ENCODE measurements at regions of chr20 and their contacts with region 1.

Region 1: GRCh38 chr20:4949833-4950178 is 51.5 kb downstream of the SLC23A2 start:
- DNase-seq: peak; percentile 63
- ATAC-seq: peak; percentile 66
- H3K4me3 ChIP-seq: peak overlapping the region in 3 of 5 experiments; percentile 23 to 37 (median 33)
- H3K4me3 Mint-ChIP-seq: peak overlapping the region; percentile 89
- H3K27ac ChIP-seq: peak overlapping the region in 1 of 2 donors; percentile 5
- H3K27ac Mint-ChIP-seq: peak overlapping the region; percentile 91
- H3K4me1 ChIP-seq: peaks cover 33 to 40% of the 10 kb centered on the region in 2 donors
- H3K4me1 Mint-ChIP-seq: peaks cover 48% of the 10 kb centered on the region
- H3K27me3 ChIP-seq: no peaks in the 10 kb centered on the region
- H3K27me3 Mint-ChIP-seq: no peaks in the 10 kb centered on the region
- CTCF ChIP-seq: peak; percentile 65

Region 2: GRCh38 chr20:4813863-4814695 is 135.7 kb before region 1 on chr20:
- CTCF ChIA-PET with region 1: interaction called, 18 read pairs
- POLR2A ChIA-PET with region 1: no interaction called
- intact Hi-C with region 1: loop called (anchors 5 kb)
- DNase-seq: peak; percentile 94
- ATAC-seq: peak; percentile 48
- H3K4me3 ChIP-seq: peak overlapping the region; percentile 49 to 67 (median 50)
- H3K4me3 Mint-ChIP-seq: peak overlapping the region; percentile 92
- H3K27ac ChIP-seq: peak overlapping the region; percentile 99
- H3K27ac Mint-ChIP-seq: peak overlapping the region; percentile 99
- H3K4me1 ChIP-seq: peaks cover 69 to 82% of the 10 kb centered on the region in 2 donors
- H3K4me1 Mint-ChIP-seq: peaks cover 87% of the 10 kb centered on the region
- H3K27me3 ChIP-seq: no peaks in the 10 kb centered on the region
- H3K27me3 Mint-ChIP-seq: no peaks in the 10 kb centered on the region
- CTCF ChIP-seq: peak; percentile 12

Region 3: DNA sequence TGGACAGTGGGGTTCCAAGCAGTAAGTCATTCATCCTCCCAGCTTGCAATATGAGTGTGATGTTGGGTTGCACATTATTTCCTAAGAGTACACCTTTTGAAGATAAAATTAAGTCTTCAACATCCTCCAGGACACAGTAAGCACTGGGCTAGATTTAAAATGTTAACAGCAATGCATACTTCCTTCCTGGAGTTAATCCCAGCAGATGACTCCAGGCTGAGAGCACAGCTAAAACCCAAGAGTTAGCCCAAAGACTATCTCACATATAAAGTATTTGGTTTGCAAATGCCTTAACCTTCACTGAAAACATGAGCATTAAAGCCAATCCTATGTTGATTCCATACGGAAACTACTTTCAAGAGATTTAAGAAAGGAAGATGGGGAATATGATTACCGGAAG is 17.7 kb before region 1 on chr20:
- CTCF ChIA-PET with region 1: interaction called, 10 read pairs
- POLR2A ChIA-PET with region 1: no interaction called
- intact Hi-C with region 1: no loop called
- DNase-seq: no peak
- ATAC-seq: no peak
- H3K4me3 ChIP-seq: no peak overlapping the region
- H3K4me3 Mint-ChIP-seq: no peak overlapping the region
- H3K27ac ChIP-seq: no peak overlapping the region
- H3K27ac Mint-ChIP-seq: no peak overlapping the region
- H3K4me1 ChIP-seq: no peaks in the 10 kb centered on the region
- H3K4me1 Mint-ChIP-seq: peaks cover 13% of the 10 kb centered on the region
- H3K27me3 ChIP-seq: no peaks in the 10 kb centered on the region
- H3K27me3 Mint-ChIP-seq: no peaks in the 10 kb centered on the region
- CTCF ChIP-seq: no peak

Region 4: DNA sequence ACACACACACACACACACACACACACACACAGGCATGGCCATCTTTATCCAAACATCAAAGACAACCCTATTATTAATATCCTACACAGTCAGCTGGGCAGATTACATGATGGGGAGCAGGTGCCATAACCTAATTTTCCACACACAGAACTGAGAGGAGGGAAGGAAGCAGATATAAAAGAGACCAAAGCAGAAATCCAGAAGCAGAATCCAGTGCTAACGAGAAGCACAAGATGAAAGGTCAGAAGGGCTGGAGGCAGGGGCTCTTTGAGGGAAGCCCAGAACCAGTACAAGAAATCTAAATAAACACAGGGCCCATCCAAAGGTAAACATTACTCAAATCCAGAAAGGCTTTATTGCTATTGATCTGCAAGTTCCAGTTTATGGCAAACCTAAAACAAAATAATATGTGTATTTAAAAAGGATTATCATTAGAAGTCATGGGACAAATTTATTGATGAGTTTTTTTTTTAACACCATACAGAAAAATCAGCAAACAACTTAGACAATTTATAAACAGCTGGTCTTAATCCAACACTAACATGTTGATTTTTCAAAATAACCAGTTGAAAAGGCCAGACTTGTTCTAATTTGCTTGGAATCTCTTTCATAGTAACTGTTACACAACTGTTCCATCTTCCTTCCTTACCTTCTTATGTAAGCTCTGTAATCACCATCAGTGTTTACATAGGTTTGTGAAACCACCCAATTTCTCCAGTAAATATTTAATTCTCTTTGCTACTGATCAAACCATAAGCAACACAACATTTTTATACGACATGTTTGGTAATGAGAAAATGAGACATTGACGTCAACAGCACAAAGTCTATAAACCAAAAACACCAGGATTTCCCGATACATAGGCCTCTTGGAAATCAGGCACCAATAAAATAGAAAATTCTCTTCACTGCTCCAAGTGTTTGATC is 17.3 kb after region 1 on chr20:
- CTCF ChIA-PET with region 1: interaction called, 12 read pairs
- POLR2A ChIA-PET with region 1: no interaction called
- intact Hi-C with region 1: no loop called
- DNase-seq: no peak
- ATAC-seq: no peak
- H3K4me3 ChIP-seq: no peak overlapping the region
- H3K4me3 Mint-ChIP-seq: no peak overlapping the region
- H3K27ac ChIP-seq: peak overlapping the region in 1 of 2 donors; percentile 46
- H3K27ac Mint-ChIP-seq: peak overlapping the region; percentile 4
- H3K4me1 ChIP-seq: peaks cover 5 to 8% of the 10 kb centered on the region in 2 donors
- H3K4me1 Mint-ChIP-seq: peaks cover 13% of the 10 kb centered on the region
- H3K27me3 ChIP-seq: no peaks in the 10 kb centered on the region
- H3K27me3 Mint-ChIP-seq: no peaks in the 10 kb centered on the region
- CTCF ChIP-seq: no peak